Panc1 (cell line): ENCODE measurements at regions of chr2 and their contacts with region 1.

Region 1: GRCh38 chr2:54122939-54123338 is 7.5 kb downstream of the ACYP2 start:
- DNase-seq: no peak
- ATAC-seq: no peak; the same call in 1 of the 2 replicates
- H3K4me3 ChIP-seq: no peak overlapping the region
- H3K27ac ChIP-seq: no peak overlapping the region
- H3K4me1 ChIP-seq: no peaks in the 10 kb centered on the region
- H3K27me3 ChIP-seq: no peaks in the 10 kb centered on the region
- CTCF ChIP-seq: no peak

Region 2: GRCh38 chr2:53994818-53995808 is 127.8 kb before region 1 on chr2:
- CTCF ChIA-PET with region 1: no interaction called
- POLR2A ChIA-PET with region 1: no interaction called
- in situ Hi-C with region 1: no loop called
- intact Hi-C with region 1: no loop called
- DNase-seq: no peak
- ATAC-seq: no peak
- H3K4me3 ChIP-seq: no peak overlapping the region
- H3K27ac ChIP-seq: no peak overlapping the region
- H3K4me1 ChIP-seq: no peaks in the 10 kb centered on the region
- H3K27me3 ChIP-seq: no peaks in the 10 kb centered on the region
- CTCF ChIP-seq: no peak

Region 3: DNA sequence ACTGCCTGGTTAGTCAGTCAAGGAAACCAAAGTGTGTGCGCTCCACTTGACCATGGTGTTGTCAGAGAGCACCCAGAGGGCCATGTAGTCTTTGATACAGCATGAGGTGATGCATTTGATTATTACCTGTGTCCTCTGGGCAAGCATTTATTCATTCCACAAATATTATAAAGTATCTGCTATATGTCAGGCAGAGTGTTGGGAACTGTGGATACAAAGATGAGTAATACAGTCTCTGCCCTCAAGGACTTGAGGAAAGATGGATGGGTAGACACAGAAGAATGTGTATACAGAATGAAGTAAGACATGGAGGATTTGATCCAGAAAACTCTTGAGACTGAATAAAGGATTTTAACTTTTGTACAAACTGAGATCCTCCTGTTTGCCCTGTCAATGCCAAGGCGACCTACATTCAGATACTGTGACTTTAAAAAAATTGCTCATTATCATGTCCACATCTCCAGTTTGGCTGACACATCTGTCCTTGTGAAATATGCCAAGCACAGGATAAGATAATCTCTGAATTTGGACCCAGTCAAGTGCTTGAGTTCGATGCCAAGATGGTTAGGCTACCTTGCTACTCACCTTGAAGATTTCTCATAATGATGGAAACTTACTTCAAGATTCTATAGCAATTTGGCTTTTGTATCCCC is 43.3 kb after region 1 on chr2:
- CTCF ChIA-PET with region 1: no interaction called
- POLR2A ChIA-PET with region 1: no interaction called
- in situ Hi-C with region 1: no loop called
- intact Hi-C with region 1: no loop called
- DNase-seq: no peak
- ATAC-seq: no peak
- H3K4me3 ChIP-seq: no peak overlapping the region
- H3K27ac ChIP-seq: no peak overlapping the region
- H3K4me1 ChIP-seq: no peaks in the 10 kb centered on the region
- H3K27me3 ChIP-seq: no peaks in the 10 kb centered on the region
- CTCF ChIP-seq: no peak

Region 4: GRCh38 chr2:54565547-54565946 is 442.6 kb after region 1 on chr2:
- CTCF ChIA-PET with region 1: no interaction called
- POLR2A ChIA-PET with region 1: interaction called, 10 read pairs
- in situ Hi-C with region 1: no loop called
- intact Hi-C with region 1: no loop called
- DNase-seq: no peak
- ATAC-seq: no peak
- H3K4me3 ChIP-seq: no peak overlapping the region
- H3K27ac ChIP-seq: no peak overlapping the region
- H3K4me1 ChIP-seq: peaks cover 61% of the 10 kb centered on the region
- H3K27me3 ChIP-seq: no peaks in the 10 kb centered on the region
- CTCF ChIP-seq: no peak